Activated B cell treated with CpG ODN at 0.5 μM for 24 hours (primary cell): ENCODE measurements at regions of chr14 and their contacts with region 1.

Region 1: GRCh38 chr14:59507063-59507780 is 22.9 kb downstream of the JKAMP start:
- DNase-seq: no peak
- ATAC-seq: peak; percentile 70
- H3K4me3 Mint-ChIP-seq: no peak overlapping the region
- H3K27ac Mint-ChIP-seq: no peak overlapping the region
- H3K4me1 Mint-ChIP-seq: no peaks in the 10 kb centered on the region
- H3K27me3 Mint-ChIP-seq: peaks cover 3% of the 10 kb centered on the region
- CTCF ChIP-seq: no peak

Region 2: DNA sequence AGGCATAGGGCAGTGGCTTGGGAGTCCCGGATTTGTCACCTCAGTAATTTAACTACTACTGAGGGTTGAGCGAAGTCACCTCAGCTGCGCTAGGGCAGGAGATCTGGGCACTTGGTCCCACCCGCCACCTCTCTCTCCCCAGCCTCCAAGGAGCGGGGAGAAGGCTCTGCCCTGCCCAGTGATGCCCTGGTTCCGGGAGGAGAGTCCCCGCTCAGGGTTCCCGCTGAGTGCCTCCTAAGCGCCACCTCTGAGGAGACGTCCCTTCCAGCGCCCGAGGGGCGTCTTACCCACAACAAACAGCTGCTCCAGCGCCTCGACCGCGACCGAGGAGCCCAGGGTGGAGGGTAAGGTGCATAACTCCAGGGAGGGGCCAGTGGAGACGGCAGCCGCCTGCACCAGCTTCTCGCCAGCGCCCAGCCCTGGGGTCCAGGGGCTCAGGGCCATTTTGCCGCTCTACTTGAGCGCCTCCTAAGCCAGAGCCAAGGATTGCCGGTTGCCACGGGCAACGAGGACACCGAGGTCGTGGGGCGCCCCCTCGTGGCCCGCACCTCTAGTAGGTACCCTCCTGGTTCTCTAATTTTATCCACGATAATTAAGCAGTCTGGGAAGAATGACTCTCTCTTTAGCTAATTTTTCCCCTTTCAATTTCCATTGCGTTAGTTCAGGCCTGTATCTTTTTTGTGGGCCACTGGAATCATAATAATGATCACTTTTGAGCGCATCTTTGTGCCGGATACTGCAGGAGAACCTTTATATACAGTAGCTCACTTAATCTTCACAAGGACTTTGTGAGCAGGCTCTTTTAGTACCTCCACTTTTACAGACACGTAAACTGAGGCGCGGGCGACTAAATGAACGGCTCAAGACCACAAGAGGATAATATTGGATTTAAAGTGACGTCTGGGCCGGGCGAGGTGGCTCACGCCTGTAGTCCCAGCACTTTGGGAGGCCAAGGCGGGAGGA is 69.4 kb after region 1 on chr14 and contains the start of gene CCDC175:
- CTCF ChIA-PET with region 1: interaction called, 6 read pairs
- POLR2A ChIA-PET with region 1: no interaction called
- intact Hi-C with region 1: loop called (anchors 1 kb)
- DNase-seq: peak; percentile 68
- ATAC-seq: peak; percentile 94
- H3K4me3 Mint-ChIP-seq: peak within 1 kb of the TSS; percentile 70
- H3K27ac Mint-ChIP-seq: no peak within 1 kb of the TSS
- H3K4me1 Mint-ChIP-seq: peaks cover 8% of the 10 kb centered on the region
- H3K27me3 Mint-ChIP-seq: peaks cover 11% of the 10 kb centered on the region
- CTCF ChIP-seq: no peak
- total RNA-seq, gene CCDC175: not detected in 2 replicates